ENCODE measurements at regions of chr10 and their contacts with region 1.

Region 1: GRCh38 chr10:24556750-24557742 is 166.6 kb downstream of the ARHGAP21 start:
- DNase-seq: peak; percentile 76
- H3K4me3 Mint-ChIP-seq: no peak overlapping the region
- H3K27ac Mint-ChIP-seq: peak overlapping the region; percentile 24
- H3K4me1 Mint-ChIP-seq: peaks cover 6% of the 10 kb centered on the region
- H3K27me3 Mint-ChIP-seq: no peaks in the 10 kb centered on the region
- CTCF ChIP-seq: peak; percentile 65

Region 2: DNA sequence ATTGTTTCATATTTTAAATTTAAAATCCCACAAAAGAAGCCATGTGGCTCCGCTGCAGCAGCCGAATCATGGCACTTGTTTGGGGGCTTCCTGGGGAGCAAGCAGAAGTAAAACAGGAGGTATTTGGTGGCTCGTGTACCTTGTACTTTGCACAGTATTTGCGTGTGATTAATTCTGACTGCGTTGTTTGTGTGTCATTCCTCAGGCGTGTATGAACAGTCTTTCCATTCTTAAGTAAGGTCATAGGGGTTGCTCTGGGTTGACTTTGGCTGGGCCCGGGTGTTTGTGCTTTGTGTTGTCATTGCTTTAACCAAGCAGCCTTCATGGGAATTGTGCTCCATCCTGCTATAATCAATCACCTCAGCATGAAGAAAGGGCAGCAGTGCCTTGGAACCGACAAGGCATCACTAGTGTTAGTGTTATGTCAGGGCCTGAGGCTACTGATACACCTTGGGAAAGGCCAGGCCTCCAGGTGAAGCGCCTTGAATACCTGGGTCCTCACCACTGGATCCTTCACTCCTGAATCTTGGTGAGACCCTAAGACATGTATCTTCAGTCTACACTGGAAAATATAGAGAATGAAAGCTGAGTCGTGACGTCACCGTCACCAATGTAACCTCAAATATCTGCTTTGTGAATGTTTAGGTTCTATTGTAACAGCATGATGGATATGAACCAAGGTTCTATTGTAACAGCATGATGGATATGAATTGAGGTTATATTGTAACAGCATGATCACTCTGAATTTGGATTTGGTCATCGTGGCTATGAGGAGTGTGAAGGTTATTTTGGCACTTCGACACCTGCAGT is 15.6 kb before region 1 on chr10:
- CTCF ChIA-PET with region 1: interaction called, 15 read pairs
- POLR2A ChIA-PET with region 1: no interaction called
- intact Hi-C with region 1: no loop called
- DNase-seq: no peak
- H3K4me3 Mint-ChIP-seq: no peak overlapping the region
- H3K27ac Mint-ChIP-seq: no peak overlapping the region
- H3K4me1 Mint-ChIP-seq: no peaks in the 10 kb centered on the region
- H3K27me3 Mint-ChIP-seq: no peaks in the 10 kb centered on the region
- CTCF ChIP-seq: no peak

Region 3: GRCh38 chr10:24569828-24570657 is 13.0 kb after region 1 on chr10:
- CTCF ChIA-PET with region 1: interaction called, 20 read pairs
- POLR2A ChIA-PET with region 1: no interaction called
- intact Hi-C with region 1: no loop called
- DNase-seq: no peak
- H3K4me3 Mint-ChIP-seq: no peak overlapping the region
- H3K27ac Mint-ChIP-seq: no peak overlapping the region
- H3K4me1 Mint-ChIP-seq: no peaks in the 10 kb centered on the region
- H3K27me3 Mint-ChIP-seq: no peaks in the 10 kb centered on the region
- CTCF ChIP-seq: no peak

Region 4: DNA sequence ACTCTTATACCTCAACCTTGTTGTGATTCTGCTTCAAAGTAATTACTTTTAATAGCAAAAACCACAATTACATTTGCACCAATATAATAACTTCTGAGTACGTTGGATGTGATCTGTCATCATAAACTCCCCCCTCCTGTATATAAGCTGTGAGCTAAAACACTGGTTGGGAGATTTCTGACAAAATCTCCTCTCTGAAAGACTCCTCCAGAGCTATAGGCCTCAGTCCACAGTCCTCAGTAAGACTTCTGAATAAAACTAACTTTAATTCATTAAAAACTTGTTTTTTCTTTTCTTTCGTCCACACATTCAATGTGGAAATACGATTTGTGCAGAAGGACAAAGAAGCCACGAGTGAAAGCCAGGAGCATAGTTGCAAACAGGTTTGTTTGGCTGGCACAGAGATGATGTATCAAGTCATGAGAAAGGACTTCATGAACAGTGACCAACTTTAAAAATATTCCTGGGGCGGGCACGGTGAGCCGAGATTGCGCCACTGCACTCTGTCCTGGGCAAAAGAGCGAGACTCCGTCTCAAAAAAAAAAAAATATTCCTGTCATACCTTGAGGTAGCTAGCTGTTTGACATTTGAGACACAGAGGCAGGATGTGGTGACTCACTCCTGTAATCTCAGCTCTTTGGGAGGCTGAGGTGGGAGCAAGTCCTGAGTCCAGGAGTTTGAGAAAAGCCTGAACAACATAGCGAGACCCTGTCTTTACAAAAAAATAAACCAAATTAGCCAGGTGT is 257.7 kb after region 1 on chr10:
- CTCF ChIA-PET with region 1: no interaction called
- POLR2A ChIA-PET with region 1: no interaction called
- intact Hi-C with region 1: no loop called
- DNase-seq: peak; percentile 89
- H3K4me3 Mint-ChIP-seq: no peak overlapping the region
- H3K27ac Mint-ChIP-seq: peak overlapping the region; percentile 88
- H3K4me1 Mint-ChIP-seq: peaks cover 1% of the 10 kb centered on the region
- H3K27me3 Mint-ChIP-seq: no peaks in the 10 kb centered on the region
- CTCF ChIP-seq: no peak